ENCODE measurements at regions of chrX and their contacts with region 1.

Region 1: DNA sequence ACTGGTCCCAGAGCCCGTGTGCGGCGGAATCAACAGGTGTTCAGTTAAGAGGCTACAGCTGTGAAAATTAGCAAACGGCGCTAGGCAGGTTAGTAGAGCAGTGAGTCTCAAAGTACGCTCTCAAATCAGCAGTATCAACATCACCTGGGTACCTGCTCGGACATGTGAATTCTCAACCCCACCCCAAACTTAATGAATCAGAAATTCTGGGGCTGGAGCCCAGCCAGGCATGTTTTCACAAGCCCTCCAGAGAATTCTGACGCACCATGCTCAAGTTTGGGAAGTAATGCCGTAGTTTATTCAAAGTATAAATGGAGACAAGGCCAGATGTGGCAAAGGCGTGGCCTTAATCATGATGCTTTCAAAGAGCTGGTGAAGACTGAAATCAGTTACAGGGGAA is 58.2 kb upstream of the PTCHD1 start:
- DNase-seq: no peak

Region 2: GRCh38 chrX:23694606-23695005 is 418.1 kb after region 1 on chrX:
- intact Hi-C with region 1: no loop called
- DNase-seq: no peak

Region 3: GRCh38 chrX:24996096-24996709 is 1719.7 kb after region 1 on chrX:
- intact Hi-C with region 1: loop called in 1 of 2 experiments (anchors 5 kb)
- DNase-seq: no peak

Measured in posterior vena cava (tissue), 2 donors.